ENCODE measurements at regions of chr5 and their contacts with region 1.

Region 1: DNA sequence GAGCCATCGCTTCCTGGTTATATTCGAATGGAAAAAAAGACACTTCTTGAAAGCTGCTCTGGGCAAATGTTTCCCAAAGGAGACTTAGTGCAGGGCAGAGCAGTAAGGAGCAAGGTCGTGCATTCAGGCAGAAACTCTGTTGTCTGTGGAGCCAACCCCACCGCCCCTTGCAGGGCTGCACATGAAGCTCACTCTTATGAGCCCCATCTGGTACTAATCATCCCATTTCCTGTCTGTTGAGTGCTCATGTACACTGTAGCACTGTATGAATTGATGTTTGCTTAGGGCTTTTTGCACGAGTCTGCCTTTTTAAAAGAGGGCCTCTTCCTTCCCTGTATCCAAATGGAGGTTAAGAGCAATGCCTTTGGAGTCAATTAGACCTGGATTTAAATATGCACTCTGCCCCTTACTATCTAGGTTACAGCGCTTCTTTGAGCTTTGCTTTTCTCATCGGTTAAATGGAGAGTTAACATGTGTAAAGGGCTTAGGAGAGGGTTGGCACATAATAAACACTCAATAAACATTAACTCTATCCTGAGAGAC is 25.4 kb downstream of the HMHB1 start:
- DNase-seq: no peak
- H3K4me3 Mint-ChIP-seq: no peak overlapping the region
- H3K27ac Mint-ChIP-seq: no peak overlapping the region
- H3K4me1 Mint-ChIP-seq: no peaks in the 10 kb centered on the region
- H3K27me3 Mint-ChIP-seq: no peaks in the 10 kb centered on the region
- CTCF ChIP-seq: no peak

Region 2: DNA sequence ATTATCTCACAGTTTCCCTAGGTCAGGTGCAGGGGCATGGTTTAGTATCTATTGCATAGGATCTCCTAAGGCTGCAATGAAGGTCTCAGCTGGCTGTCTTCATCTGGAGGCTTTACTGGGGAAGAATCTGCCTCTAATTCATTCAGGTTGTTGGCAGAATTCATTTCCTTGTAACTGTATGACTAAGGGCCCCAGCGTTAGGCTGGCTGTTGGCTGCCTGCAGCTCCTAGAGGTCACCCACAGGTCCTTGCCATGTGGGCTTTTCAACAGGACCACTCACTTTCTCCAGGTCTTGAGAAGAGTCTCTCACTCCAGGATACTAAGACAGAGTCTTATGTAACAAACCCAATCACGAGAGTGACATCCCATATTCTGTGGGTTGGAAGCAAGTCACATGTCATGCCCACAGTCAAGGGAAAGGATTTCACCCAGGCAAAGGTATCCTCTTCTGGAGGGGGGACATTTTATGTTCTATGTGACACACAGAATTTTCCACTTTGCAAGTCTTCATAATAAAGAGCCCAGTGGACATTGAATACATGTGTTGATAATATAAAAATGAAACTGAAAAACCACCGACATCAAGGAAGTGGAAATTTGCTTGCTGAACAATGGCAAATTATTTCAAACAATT is 12.8 kb after region 1 on chr5:
- CTCF ChIA-PET with region 1: interaction called, 4 read pairs
- POLR2A ChIA-PET with region 1: interaction called, 12 read pairs
- intact Hi-C with region 1: no loop called
- DNase-seq: peak; percentile 10
- H3K4me3 Mint-ChIP-seq: no peak overlapping the region
- H3K27ac Mint-ChIP-seq: no peak overlapping the region
- H3K4me1 Mint-ChIP-seq: peaks cover 5% of the 10 kb centered on the region
- H3K27me3 Mint-ChIP-seq: no peaks in the 10 kb centered on the region
- CTCF ChIP-seq: no peak

Measured in MCF 10A (cell line).